ENCODE measurements at regions of chr15 and their contacts with region 1.

Region 1: DNA sequence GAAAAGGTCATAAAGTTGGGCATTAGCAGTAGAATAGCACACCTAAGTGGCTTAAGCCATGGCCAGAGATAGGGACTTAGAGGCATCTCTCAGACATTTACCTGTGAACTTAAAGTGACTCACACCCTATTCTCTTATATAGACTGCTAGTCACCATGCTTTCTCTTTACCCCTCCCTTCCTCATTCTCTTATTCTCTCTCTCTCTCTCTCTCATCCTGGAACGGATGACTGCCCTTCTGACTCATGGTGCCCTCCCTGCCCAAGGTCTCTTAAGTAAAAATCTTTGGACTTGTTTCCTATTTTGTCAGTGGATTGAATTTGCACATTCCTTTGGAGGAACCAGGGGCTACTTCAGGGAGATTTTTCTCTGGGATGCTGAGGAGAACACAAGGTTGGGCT is 58.8 kb downstream of the NPAP1 start:
- DNase-seq: no peak
- ATAC-seq: no peak
- H3K4me3 ChIP-seq: no peak overlapping the region
- H3K27ac ChIP-seq: no peak overlapping the region
- H3K4me1 ChIP-seq: no peaks in the 10 kb centered on the region
- H3K27me3 ChIP-seq: no peaks in the 10 kb centered on the region
- CTCF ChIP-seq: no peak
- EP300 ChIP-seq: no peak
- POLR2A ChIP-seq: no peak
- RAD21 ChIP-seq: no peak

Region 2: DNA sequence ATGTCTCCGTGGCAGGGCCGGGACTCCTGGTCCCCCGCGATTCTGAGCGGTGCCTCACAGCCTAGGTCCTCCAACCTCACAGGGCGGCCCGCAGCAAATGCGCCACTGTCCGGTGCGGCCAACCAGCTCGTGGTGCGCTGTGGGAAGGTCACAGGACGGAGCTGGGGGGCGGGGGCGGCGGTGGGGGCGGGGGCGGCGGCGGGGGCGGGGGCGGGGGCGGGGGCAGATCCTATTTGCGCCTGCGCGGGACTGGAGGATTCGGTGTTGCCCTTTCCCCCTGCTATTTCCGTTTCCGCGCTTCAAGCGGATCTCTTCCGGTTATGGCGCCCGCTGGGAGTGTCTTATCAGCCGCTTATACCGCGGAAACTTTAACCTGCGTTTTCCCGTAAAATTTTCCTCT is 113.7 kb after region 1 on chr15:
- CTCF ChIA-PET with region 1: no interaction called
- POLR2A ChIA-PET with region 1: no interaction called
- in situ Hi-C with region 1: loop called (anchors 25 kb)
- intact Hi-C with region 1: no loop called
- DNase-seq: no peak
- ATAC-seq: no peak
- H3K4me3 ChIP-seq: peak overlapping the region in 1 of 3 experiments; percentile 12; a peak in 2 of 6 replicates
- H3K27ac ChIP-seq: no peak overlapping the region
- H3K4me1 ChIP-seq: no peaks in the 10 kb centered on the region
- H3K27me3 ChIP-seq: peaks cover 0 to 2% of the 10 kb centered on the region in 2 experiments; a peak in 1 of 5 replicates
- CTCF ChIP-seq: no peak
- EP300 ChIP-seq: no peak
- POLR2A ChIP-seq: no peak
- RAD21 ChIP-seq: no peak

Measured in HepG2 (cell line).